Right cardiac atrium (tissue), 5 donors: ENCODE measurements at regions of chr16 and their contacts with region 1.

Region 1: DNA sequence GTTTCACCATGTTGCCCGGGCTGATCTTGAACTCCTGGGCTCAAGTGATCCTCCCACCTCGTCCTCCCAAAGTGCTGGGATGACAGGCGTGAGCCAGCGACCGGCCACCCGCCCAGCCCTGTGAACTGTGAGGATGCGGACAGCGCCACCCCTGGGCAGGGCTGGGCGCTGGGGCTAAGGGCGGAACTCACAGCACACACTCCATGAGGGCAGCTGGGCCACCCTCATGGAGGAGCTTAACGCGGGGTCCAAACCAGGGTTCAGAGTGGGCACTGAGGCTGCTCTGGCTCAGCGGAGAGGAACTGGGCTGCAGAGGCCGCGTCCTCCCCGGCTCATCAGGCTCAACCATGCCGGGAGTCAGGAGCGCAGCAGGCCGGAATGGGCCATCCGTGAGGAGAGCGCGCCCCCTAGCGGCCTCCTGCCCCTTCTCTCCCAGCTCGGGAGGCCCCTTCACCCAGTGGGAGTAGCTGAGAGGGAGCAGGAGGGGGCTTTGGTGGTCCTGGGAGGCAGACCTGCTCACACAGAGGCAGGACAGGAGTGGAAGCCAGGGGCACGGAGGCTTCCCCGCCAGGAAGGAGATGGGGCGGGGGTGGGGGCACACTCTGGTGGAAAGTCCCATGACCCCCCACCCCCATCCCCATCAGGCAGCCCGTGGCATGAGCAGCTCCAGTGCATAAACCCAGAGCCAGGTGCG is 13.8 kb downstream of the CORO7 start:
- DNase-seq: peak; percentile 85 to 95 (median 94)
- ATAC-seq: peak; percentile 93
- H3K4me3 ChIP-seq: no peak overlapping the region
- H3K27ac ChIP-seq: no peak overlapping the region
- H3K4me1 ChIP-seq: no peaks in the 10 kb centered on the region
- H3K27me3 ChIP-seq: no peaks in the 10 kb centered on the region

Region 2: GRCh38 chr16:4288148-4288921 is 114.3 kb before region 1 on chr16:
- intact Hi-C with region 1: loop called in 2 of 4 experiments (anchors 10 kb)
- DNase-seq: peak; percentile 75 to 92 (median 92)
- ATAC-seq: peak; percentile 77 to 86
- H3K4me3 ChIP-seq: no peak overlapping the region
- H3K27ac ChIP-seq: no peak overlapping the region
- H3K4me1 ChIP-seq: peaks cover 2% of the 10 kb centered on the region
- H3K27me3 ChIP-seq: no peaks in the 10 kb centered on the region

Region 3: DNA sequence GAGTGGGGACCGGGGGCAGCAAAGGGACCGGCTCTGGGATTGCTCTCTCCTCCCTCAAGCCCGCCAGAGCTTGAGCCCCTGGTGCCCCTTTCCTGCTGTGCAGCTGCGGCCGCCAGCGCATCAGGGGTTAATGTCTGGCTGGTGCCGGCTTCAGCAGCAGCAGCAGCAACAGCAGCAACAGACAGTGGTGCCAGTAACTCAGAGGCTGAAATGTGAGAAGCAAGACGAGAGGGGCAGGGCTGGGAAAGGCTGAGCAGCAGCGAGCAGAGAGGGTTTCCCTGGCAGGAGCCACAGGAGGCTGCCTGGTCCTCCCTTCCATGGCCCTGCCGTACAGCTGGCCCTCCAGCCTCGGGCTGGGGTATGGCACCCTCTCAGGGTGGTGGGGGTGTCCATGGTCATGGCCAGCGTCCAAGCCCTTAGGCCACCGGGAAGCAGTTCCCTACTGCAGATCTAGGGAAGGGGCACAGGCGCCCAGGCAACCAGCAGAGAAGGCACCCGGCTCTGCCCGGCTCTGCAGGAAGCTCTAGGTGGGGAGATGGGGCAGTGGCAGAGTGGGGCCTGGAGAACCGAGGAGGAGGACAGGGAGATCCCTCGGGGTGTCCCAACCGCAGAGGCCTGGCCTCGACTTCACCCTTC is 108.6 kb before region 1 on chr16:
- intact Hi-C with region 1: loop called in 2 of 4 experiments (anchors 10 kb)
- DNase-seq: peak; percentile 67 to 85 (median 84)
- ATAC-seq: peak; percentile 77 to 86
- H3K4me3 ChIP-seq: no peak overlapping the region
- H3K27ac ChIP-seq: no peak overlapping the region
- H3K4me1 ChIP-seq: no peaks in the 10 kb centered on the region
- H3K27me3 ChIP-seq: no peaks in the 10 kb centered on the region

Region 4: GRCh38 chr16:4358831-4359561 is 43.6 kb before region 1 on chr16:
- intact Hi-C with region 1: loop called (anchors 1 to 2 kb)
- DNase-seq: peak; percentile 70 to 88 (median 88)
- ATAC-seq: peak; percentile 64
- H3K4me3 ChIP-seq: no peak overlapping the region
- H3K27ac ChIP-seq: no peak overlapping the region
- H3K4me1 ChIP-seq: no peaks in the 10 kb centered on the region
- H3K27me3 ChIP-seq: no peaks in the 10 kb centered on the region

Region 5: GRCh38 chr16:5354645-5355044 is 952.1 kb after region 1 on chr16:
- intact Hi-C with region 1: no loop called
- DNase-seq: no peak
- ATAC-seq: no peak
- H3K4me3 ChIP-seq: no peak overlapping the region
- H3K27ac ChIP-seq: no peak overlapping the region
- H3K4me1 ChIP-seq: no peaks in the 10 kb centered on the region
- H3K27me3 ChIP-seq: no peaks in the 10 kb centered on the region